ENCODE measurements at regions of chr9 and their contacts with region 1.

Region 1: GRCh38 chr9:6068983-6069382 is 53.6 kb upstream of the RANBP6 start:
- DNase-seq: peak in 2 of 5 donors; percentile 62 to 74
- H3K4me3 ChIP-seq: peak overlapping the region; percentile 35
- H3K4me3 Mint-ChIP-seq: peak overlapping the region in 6 of 7 donors; percentile 5 to 69 (median 52)
- H3K27ac ChIP-seq: peak overlapping the region; percentile 43
- H3K27ac Mint-ChIP-seq: peak overlapping the region; percentile 40 to 93 (median 83)
- H3K4me1 ChIP-seq: peaks cover 18% of the 10 kb centered on the region
- H3K4me1 Mint-ChIP-seq: peaks cover 17 to 34% (median 25%) of the 10 kb centered on the region in 3 donors
- H3K27me3 ChIP-seq: no peaks in the 10 kb centered on the region
- H3K27me3 Mint-ChIP-seq: no peaks in the 10 kb centered on the region

Region 2: GRCh38 chr9:5628530-5629311 is 440.3 kb before region 1 on chr9 and contains the start of gene RIC1:
- CTCF ChIA-PET with region 1: no interaction called
- POLR2A ChIA-PET with region 1: interaction called, 10 read pairs
- DNase-seq: peak; percentile 84 to 92 (median 90)
- H3K4me3 ChIP-seq: peak within 1 kb of the TSS; percentile 68
- H3K4me3 Mint-ChIP-seq: peak within 1 kb of the TSS; percentile 96 to 99 (median 98)
- H3K27ac ChIP-seq: peak within 1 kb of the TSS; percentile 81
- H3K27ac Mint-ChIP-seq: peak within 1 kb of the TSS; percentile 93 to 99 (median 98)
- H3K4me1 ChIP-seq: peaks cover 47% of the 10 kb centered on the region
- H3K4me1 Mint-ChIP-seq: peaks cover 52 to 72% (median 65%) of the 10 kb centered on the region in 3 donors
- H3K27me3 ChIP-seq: no peaks in the 10 kb centered on the region
- H3K27me3 Mint-ChIP-seq: no peaks in the 10 kb centered on the region
- total RNA-seq, gene RIC1: 13.2 to 15.0 TPM

Region 3: GRCh38 chr9:6055213-6055612 is 13.8 kb before region 1 on chr9:
- CTCF ChIA-PET with region 1: interaction called, 14 read pairs
- POLR2A ChIA-PET with region 1: interaction called, 5 read pairs
- DNase-seq: peak in 2 of 5 donors; percentile 46 to 50
- H3K4me3 ChIP-seq: no peak overlapping the region
- H3K4me3 Mint-ChIP-seq: no peak overlapping the region
- H3K27ac ChIP-seq: no peak overlapping the region
- H3K27ac Mint-ChIP-seq: peak overlapping the region in 1 of 8 donors; percentile 33
- H3K4me1 ChIP-seq: peaks cover 4% of the 10 kb centered on the region
- H3K4me1 Mint-ChIP-seq: peaks cover 0 to 4% (median under 1%) of the 10 kb centered on the region in 3 donors
- H3K27me3 ChIP-seq: no peaks in the 10 kb centered on the region
- H3K27me3 Mint-ChIP-seq: peaks cover 8 to 9% of the 10 kb centered on the region in 2 donors

Region 4: DNA sequence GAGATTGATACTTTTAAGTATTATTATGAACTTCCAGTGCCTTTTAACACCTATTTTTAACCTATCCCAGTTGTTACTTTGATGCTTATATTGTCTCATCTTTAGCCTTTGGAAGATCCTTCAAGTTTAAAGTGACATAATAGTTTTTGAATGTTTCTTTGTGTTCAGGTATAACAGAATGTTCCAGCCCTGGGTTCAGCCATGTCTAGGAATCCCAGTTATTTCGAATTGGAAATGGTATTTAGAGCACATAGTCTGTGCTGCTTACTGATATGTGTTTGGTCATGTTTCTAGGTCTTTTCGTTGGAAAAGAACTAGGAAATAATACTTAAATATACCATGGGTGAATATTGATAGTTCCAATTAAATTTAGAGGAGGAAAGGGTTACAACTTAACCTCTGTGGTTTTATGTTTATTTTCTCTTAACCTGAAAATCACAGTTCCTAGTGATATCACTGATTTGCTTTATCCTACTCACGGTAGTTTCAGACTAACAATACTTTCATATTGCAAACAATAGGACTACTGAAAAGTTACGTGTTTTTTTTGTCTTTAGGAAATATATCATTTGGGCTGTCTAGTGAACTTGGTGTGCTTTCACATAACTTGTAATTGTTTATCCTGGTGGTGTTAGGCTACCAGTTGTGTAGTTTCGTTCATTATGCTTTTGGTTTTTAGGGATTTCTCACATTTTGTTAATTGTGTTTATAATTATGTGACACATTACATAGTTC is 381.8 kb after region 1 on chr9:
- CTCF ChIA-PET with region 1: no interaction called
- POLR2A ChIA-PET with region 1: no interaction called
- DNase-seq: no peak
- H3K4me3 ChIP-seq: no peak overlapping the region
- H3K4me3 Mint-ChIP-seq: peak overlapping the region in 3 of 7 donors; percentile 17 to 43 (median 21)
- H3K27ac ChIP-seq: no peak overlapping the region
- H3K27ac Mint-ChIP-seq: peak overlapping the region in 5 of 8 donors; percentile 1 to 22 (median 7)
- H3K4me1 ChIP-seq: peaks cover 34% of the 10 kb centered on the region
- H3K4me1 Mint-ChIP-seq: peaks cover 73 to 87% (median 77%) of the 10 kb centered on the region in 3 donors
- H3K27me3 ChIP-seq: no peaks in the 10 kb centered on the region
- H3K27me3 Mint-ChIP-seq: no peaks in the 10 kb centered on the region